Endothelial cell of umbilical vein (primary cell): ENCODE measurements at regions of chr11 and their contacts with region 1.

Region 1: DNA sequence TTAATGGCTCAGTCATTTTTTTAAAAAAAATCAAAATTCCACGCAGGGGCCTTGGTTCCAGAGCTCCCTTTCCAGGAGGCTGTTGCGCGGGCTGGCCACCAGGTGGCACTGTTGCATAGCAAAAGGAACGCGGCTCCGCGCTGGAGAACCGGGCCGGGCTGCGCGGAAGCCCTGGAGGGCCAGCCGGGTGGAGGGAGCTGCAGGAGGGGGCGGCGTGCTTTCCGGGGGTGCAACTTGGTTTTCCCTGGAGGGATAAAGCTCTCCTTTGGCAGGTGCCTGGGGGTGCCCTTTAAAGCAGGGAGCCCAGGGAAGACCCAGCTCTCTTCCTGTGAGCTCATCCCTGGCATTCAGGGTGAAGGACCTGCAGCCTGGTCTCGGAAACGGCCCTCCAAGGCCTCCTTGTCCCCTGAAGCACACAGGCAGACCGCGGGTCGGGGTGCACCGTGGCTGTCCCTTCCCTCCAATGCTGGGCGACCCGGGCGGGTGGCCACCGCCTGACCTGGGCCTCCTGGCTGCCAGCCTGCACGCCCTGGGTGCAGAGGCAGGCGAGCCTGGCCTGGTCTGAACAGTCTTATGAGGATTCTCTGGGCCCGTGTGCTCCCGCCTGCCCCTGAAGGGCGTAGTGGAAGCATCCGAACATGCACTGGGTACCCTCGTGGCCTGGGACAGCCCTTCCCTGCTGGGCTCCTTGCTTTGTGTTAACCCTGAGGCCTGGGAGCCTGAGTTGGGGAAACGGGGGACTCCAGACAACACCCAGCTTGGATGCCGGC is 23.4 kb downstream of the KRTAP5-5 start:
- DNase-seq: peak; percentile 44
- H3K4me3 ChIP-seq: no peak overlapping the region
- H3K27ac ChIP-seq: no peak overlapping the region
- H3K4me1 ChIP-seq: peaks cover 2% of the 10 kb centered on the region
- H3K27me3 ChIP-seq: peaks cover 0 to 4% of the 10 kb centered on the region in 2 experiments
- CTCF ChIP-seq: peak; percentile 93
- POLR2A ChIP-seq: no peak

Region 2: DNA sequence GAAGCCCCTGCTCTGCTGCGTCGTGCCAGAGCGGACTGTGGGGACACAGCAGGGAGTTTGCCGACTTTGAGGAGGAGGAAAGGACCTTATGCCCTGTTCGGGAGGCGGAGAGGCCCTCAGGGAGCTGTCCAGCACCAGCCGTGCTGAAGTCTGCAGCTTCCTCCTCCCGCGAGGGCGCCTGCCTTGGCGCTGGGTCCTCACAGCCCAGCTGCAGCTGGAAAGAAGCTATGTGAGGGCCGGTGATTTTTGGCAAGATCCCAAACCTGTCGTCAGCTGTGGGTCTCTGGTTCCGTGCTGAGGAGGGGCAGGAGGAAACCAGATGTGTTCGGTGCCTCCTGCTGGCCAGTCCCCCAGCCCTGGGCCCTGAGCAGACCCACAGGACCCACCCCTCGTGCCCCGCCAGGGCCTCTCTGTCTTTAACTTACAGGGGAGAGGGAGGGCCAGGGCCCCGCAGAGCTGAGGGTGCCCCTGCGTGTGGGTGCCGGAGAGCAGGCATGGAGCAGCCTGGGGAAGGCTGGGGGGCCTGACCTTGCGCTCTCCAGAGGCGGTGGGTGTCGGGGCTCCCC is 251.2 kb before region 1 on chr11:
- CTCF ChIA-PET with region 1: no interaction called
- POLR2A ChIA-PET with region 1: no interaction called
- dilution Hi-C with region 1: no loop called
- intact Hi-C with region 1: no loop called
- DNase-seq: peak; percentile 33
- H3K4me3 ChIP-seq: no peak overlapping the region
- H3K27ac ChIP-seq: no peak overlapping the region
- H3K4me1 ChIP-seq: no peaks in the 10 kb centered on the region
- H3K27me3 ChIP-seq: no peaks in the 10 kb centered on the region
- CTCF ChIP-seq: peak in 1 of 2 donors; percentile 0
- POLR2A ChIP-seq: no peak

Region 3: DNA sequence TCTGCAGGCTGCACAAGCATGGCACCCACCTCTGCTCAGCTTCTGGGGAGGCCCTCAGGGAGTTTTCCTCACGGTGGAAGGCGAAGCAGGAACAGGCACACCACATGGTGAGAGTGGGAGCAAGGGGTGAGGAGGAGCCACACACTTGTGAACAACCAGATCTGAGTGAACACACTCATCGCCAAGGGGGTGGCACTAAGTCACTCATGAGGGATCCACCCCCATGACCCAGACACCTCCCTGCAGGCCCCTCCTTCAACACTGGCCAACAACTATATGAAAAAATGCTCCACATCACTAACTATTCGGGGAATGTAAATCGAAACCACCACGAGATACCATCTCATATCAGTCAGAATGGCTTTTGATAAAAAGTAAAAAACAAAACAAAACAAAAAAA is 54.1 kb before region 1 on chr11:
- CTCF ChIA-PET with region 1: interaction called, 10 read pairs
- POLR2A ChIA-PET with region 1: no interaction called
- dilution Hi-C with region 1: no loop called
- intact Hi-C with region 1: no loop called
- DNase-seq: no peak
- H3K4me3 ChIP-seq: no peak overlapping the region
- H3K27ac ChIP-seq: no peak overlapping the region
- H3K4me1 ChIP-seq: no peaks in the 10 kb centered on the region
- H3K27me3 ChIP-seq: peaks cover 0 to 5% of the 10 kb centered on the region in 2 experiments
- CTCF ChIP-seq: no peak
- POLR2A ChIP-seq: no peak

Region 4: GRCh38 chr11:1682225-1682905 is 29.4 kb after region 1 on chr11:
- CTCF ChIA-PET with region 1: interaction called, 21 read pairs
- POLR2A ChIA-PET with region 1: no interaction called
- dilution Hi-C with region 1: no loop called
- intact Hi-C with region 1: no loop called
- DNase-seq: no peak
- H3K4me3 ChIP-seq: no peak overlapping the region
- H3K27ac ChIP-seq: no peak overlapping the region
- H3K4me1 ChIP-seq: no peaks in the 10 kb centered on the region
- H3K27me3 ChIP-seq: no peaks in the 10 kb centered on the region
- CTCF ChIP-seq: no peak
- POLR2A ChIP-seq: no peak

Region 5: DNA sequence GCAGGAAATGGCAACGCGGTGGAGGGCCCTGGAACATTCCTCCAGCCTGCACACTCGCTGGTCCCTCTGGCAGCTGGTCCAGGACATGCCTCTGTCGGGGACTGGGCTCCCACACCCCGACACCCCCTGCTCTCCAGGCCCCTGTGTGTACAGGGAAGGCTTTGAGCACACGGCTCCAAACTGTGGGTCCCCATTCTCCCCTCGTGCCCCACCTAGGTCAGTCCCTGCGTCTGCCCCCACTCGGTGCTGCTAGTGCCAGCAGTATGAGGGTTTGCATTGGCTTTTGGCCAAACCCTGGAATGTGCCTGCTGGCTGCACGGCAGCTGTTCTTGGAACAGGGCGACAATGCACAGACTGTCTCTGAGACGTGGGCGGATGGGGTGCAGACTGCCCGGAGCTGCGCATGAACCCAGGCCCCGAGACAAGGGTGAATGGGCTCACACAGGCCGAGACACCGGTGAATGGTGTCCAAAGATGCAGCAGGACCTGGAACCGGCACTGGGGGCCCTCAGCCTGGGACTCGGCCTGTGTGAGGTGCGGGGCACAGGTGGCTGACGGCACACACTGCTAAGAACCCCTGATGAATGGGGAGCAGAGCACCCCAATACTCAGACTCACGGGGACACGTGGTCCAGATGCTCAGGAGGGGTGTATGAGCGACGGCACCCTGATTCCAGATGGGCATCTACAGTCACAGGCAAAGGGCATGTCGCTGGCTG is 174.3 kb after region 1 on chr11:
- CTCF ChIA-PET with region 1: interaction called, 337 read pairs
- POLR2A ChIA-PET with region 1: no interaction called
- dilution Hi-C with region 1: no loop called
- intact Hi-C with region 1: loop called (anchors 1 kb)
- DNase-seq: peak; percentile 41
- H3K4me3 ChIP-seq: no peak overlapping the region
- H3K27ac ChIP-seq: no peak overlapping the region
- H3K4me1 ChIP-seq: peaks cover 3% of the 10 kb centered on the region
- H3K27me3 ChIP-seq: no peaks in the 10 kb centered on the region
- CTCF ChIP-seq: no peak
- POLR2A ChIP-seq: no peak

Region 6: DNA sequence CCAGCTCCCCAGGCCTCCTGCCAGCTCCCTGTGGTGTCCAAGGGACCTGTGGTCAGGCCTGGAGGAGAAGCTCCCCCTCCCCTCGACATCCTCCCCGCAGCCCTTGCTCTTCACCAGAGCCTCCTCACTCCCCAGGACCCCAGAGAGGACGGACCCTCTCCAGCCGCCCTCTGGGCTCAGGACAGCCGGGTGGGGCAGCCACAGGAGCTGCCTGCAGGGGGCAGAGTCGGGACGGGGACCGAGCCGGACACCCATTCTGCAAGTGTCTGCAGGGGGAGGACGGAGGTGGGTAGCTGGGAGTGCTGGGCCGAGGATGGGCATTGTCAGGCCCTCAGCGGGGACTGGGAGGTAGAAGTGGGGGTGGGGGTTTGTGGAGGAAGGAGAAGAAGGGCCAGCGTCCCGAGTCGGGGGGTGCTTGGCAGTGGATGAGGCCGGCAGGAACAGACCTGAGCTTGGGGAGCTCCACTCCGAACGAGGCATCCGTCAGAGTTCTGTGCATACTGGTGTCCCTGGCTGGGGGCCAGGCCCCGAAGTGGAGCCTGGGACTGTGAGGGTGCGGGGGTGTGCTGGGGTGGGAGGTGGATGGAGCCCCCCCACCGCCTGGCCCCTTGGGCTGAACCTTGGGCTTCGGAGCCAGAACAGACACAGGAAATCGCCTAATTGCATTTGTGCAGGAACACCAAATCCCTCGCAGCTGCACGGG is 223.6 kb after region 1 on chr11:
- CTCF ChIA-PET with region 1: interaction called, 34 read pairs
- POLR2A ChIA-PET with region 1: no interaction called
- dilution Hi-C with region 1: no loop called
- intact Hi-C with region 1: no loop called
- DNase-seq: no peak
- H3K4me3 ChIP-seq: no peak overlapping the region
- H3K27ac ChIP-seq: no peak overlapping the region
- H3K4me1 ChIP-seq: no peaks in the 10 kb centered on the region
- H3K27me3 ChIP-seq: no peaks in the 10 kb centered on the region
- CTCF ChIP-seq: peak; percentile 61 to 76
- POLR2A ChIP-seq: no peak

Region 7: DNA sequence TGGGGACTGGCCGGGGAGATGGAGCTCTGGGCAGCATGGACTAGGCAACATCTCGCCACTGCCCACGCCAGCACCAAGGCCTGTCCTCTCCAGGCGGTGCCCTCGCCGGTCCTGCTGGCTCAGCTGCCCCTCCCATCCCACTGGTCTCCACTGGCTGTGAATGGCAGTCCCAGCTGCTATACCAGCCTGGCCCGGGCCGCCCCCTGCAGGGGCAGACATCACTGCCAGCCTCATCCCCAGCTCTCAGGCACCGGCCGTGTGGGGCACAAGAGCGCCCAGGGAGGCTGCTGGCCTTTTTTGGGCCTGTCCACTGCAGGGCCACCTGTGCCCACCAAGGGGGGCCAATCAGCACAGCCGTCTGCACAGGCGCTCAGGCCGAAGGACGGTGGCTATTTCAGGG is 374.8 kb after region 1 on chr11:
- CTCF ChIA-PET with region 1: interaction called, 14 read pairs
- POLR2A ChIA-PET with region 1: no interaction called
- dilution Hi-C with region 1: no loop called
- intact Hi-C with region 1: no loop called
- DNase-seq: no peak
- H3K4me3 ChIP-seq: no peak overlapping the region
- H3K27ac ChIP-seq: no peak overlapping the region
- H3K4me1 ChIP-seq: no peaks in the 10 kb centered on the region
- H3K27me3 ChIP-seq: no peaks in the 10 kb centered on the region
- CTCF ChIP-seq: no peak
- POLR2A ChIP-seq: no peak